ENCODE measurements at regions of chr16 and their contacts with region 1.

Region 1: DNA sequence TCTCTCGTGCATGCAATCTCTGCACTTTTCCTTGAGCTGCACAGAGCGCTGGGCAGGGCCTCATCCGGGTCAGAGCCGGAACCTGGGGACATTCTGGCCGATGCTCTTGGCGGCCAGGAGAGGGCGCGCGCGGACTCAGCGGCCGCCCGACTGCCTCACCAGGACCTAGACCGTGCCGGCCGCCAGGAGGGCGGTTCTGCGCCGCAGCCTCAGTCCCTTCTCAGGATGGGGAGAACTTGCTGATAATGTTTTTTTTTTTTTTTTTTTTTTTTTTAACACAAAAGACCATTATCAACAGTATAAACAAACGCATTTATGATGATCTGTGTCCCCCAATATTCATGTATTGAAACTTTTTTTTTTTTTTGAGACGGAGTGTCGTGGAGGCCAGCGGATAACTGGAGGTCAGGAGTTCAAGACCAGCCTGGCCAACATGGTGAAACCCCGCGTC is 8.1 kb upstream of the FLYWCH2 start:
- DNase-seq: peak; percentile 82 to 88 (median 86)
- ATAC-seq: peak; percentile 100
- H3K4me3 ChIP-seq: no peak overlapping the region
- H3K27ac ChIP-seq: no peak overlapping the region
- H3K4me1 ChIP-seq: peaks cover 0 to 11% of the 10 kb centered on the region in 2 experiments; a peak in 3 of 5 replicates
- H3K27me3 ChIP-seq: no peaks in the 10 kb centered on the region
- CTCF ChIP-seq: peak; percentile 97 to 99 (median 98)
- EP300 ChIP-seq: no peak
- POLR2A ChIP-seq: no peak
- RAD21 ChIP-seq: peak; percentile 78 to 91

Region 2: GRCh38 chr16:2350500-2350899 is 524.4 kb before region 1 on chr16:
- CTCF ChIA-PET with region 1: no interaction called
- POLR2A ChIA-PET with region 1: no interaction called
- in situ Hi-C with region 1: no loop called
- intact Hi-C with region 1: no loop called
- DNase-seq: no peak
- ATAC-seq: no peak
- H3K4me3 ChIP-seq: no peak overlapping the region
- H3K27ac ChIP-seq: no peak overlapping the region
- H3K4me1 ChIP-seq: no peaks in the 10 kb centered on the region
- H3K27me3 ChIP-seq: no peaks in the 10 kb centered on the region
- CTCF ChIP-seq: no peak
- EP300 ChIP-seq: no peak
- POLR2A ChIP-seq: no peak
- RAD21 ChIP-seq: no peak

Region 3: GRCh38 chr16:2838928-2839327 is 36.0 kb before region 1 on chr16:
- CTCF ChIA-PET with region 1: interaction called, 23 read pairs
- POLR2A ChIA-PET with region 1: no interaction called
- in situ Hi-C with region 1: loop called (anchors 5 kb)
- intact Hi-C with region 1: no loop called
- DNase-seq: peak; percentile 75 to 80 (median 77)
- ATAC-seq: peak; percentile 92
- H3K4me3 ChIP-seq: no peak overlapping the region
- H3K27ac ChIP-seq: no peak overlapping the region
- H3K4me1 ChIP-seq: peaks cover 3 to 41% of the 10 kb centered on the region in 2 experiments; a peak in 4 of 5 replicates
- H3K27me3 ChIP-seq: peaks cover 4 to 22% of the 10 kb centered on the region in 2 experiments; a peak in 2 of 5 replicates
- CTCF ChIP-seq: peak; percentile 88 to 95 (median 94)
- EP300 ChIP-seq: no peak
- POLR2A ChIP-seq: no peak
- RAD21 ChIP-seq: peak; percentile 89 to 95

Region 4: DNA sequence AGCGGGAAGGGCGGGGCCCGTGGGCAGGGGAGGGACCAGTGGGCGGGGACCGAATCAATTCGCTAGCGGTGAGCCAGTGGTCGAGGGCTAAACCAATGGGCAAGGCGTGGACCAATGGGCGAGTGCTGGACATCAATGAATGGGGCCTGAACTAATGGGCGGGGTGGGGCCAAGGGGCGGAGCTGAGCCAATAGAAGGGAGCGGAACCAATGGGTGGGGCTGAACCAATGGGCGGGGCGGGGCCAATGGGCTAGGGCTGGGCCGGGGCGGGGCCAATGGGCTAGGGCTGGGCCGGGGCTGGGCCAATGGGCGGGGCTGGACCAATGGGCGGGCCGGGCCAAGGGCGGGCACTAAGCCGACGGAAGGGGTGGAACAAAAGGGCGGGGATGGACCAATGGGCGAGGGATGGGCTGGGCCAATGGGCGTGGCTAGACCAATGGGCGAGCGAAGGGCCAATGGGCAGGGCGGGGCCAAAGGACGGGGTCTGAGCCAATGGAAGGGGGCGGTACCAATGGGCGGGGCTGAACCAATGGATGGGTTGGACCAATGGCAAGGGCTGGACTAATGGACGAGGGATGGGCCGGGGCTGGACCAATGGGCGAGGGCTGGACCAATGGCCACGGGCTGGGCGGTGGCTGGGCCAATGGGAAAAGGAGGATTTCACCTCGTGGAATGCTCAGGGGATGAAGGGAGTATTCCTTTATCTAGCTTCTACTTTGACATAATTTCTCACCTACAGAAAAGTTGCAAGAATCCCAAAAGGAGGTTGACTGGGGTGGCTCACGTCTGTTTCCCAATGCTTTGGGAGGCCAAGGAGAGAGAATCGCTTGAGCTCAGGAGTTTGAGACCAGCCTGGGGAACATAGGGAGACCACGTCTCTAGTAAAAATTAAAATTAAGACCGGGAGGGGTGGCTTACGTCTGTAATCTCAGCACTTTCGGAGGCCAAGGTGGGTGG is 30.8 kb after region 1 on chr16:
- CTCF ChIA-PET with region 1: interaction called, 24 read pairs
- POLR2A ChIA-PET with region 1: interaction called, 3 read pairs
- in situ Hi-C with region 1: loop called (anchors 5 kb)
- intact Hi-C with region 1: loop called (anchors 1 kb)
- DNase-seq: peak; percentile 96 to 99 (median 98)
- ATAC-seq: peak; percentile 90
- H3K4me3 ChIP-seq: peak overlapping the region; percentile 99
- H3K27ac ChIP-seq: peak overlapping the region; percentile 94
- H3K4me1 ChIP-seq: peaks cover 14 to 33% of the 10 kb centered on the region in 2 experiments; a peak in 4 of 5 replicates
- H3K27me3 ChIP-seq: no peaks in the 10 kb centered on the region
- CTCF ChIP-seq: no peak
- EP300 ChIP-seq: no peak
- POLR2A ChIP-seq: no peak
- RAD21 ChIP-seq: no peak

Region 5: DNA sequence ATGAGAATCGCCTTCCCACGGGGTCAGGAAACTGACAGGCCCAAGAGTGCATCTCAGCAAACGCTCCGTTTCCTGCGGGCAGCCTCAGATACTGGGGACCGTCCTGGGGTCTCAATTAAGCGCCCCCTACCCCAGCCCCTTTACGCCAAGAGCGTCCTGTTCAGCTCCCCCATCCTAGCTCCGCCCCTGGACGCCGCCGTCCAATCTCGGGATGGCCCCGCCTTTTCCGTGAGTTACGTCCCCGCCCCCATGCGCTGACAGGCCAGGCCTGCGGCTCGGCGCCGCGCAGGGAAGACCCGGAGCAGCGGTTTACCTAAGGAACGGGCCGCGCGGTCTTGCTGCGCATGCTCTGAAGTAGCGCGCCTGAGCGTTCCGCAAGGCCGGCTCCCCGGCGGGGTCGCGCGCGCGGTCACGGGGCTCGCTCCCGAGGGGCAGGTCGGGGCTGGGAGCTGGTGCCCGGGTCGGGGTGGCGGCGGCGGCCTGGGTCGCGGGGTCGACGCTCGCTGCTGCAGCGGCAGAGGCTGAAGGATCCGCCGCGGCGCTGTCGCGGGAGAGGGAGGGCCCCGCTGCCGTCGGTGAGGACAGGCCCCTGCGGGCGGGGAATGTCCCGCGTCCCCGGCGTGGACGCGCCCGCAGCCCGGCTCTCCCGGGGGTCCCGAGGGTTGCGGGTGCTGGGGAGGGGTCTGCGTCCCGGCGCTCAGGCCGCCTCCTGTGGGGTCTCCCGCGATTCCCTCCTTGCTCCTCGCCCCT is 36.8 kb after region 1 on chr16 and contains the start of gene FLYWCH1:
- CTCF ChIA-PET with region 1: interaction called, 24 read pairs
- POLR2A ChIA-PET with region 1: interaction called, 5 read pairs
- in situ Hi-C with region 1: loop called (anchors 5 kb)
- intact Hi-C with region 1: no loop called
- DNase-seq: peak; percentile 93 to 99 (median 94)
- ATAC-seq: peak; percentile 96
- H3K4me3 ChIP-seq: peak within 1 kb of the TSS; percentile 57
- H3K27ac ChIP-seq: peak within 1 kb of the TSS; percentile 76
- H3K4me1 ChIP-seq: peaks cover 20 to 38% of the 10 kb centered on the region in 2 experiments
- H3K27me3 ChIP-seq: no peaks in the 10 kb centered on the region
- CTCF ChIP-seq: no peak
- EP300 ChIP-seq: no peak
- POLR2A ChIP-seq: peak; percentile 65; the same call in 1 of the 2 replicates
- RAD21 ChIP-seq: no peak
- polyA plus RNA-seq, gene FLYWCH1: 0.18 to 0.52 TPM

Region 6: GRCh38 chr16:2919511-2920255 is 44.7 kb after region 1 on chr16:
- CTCF ChIA-PET with region 1: interaction called, 11 read pairs
- POLR2A ChIA-PET with region 1: no interaction called
- in situ Hi-C with region 1: loop called (anchors 5 kb)
- intact Hi-C with region 1: loop called (anchors 2 kb)
- DNase-seq: peak; percentile 58 to 76 (median 62)
- ATAC-seq: peak; percentile 70
- H3K4me3 ChIP-seq: no peak overlapping the region
- H3K27ac ChIP-seq: no peak overlapping the region
- H3K4me1 ChIP-seq: peaks cover 9 to 11% of the 10 kb centered on the region in 2 experiments
- H3K27me3 ChIP-seq: no peaks in the 10 kb centered on the region
- CTCF ChIP-seq: peak; percentile 78 to 87 (median 86)
- EP300 ChIP-seq: no peak
- POLR2A ChIP-seq: no peak
- RAD21 ChIP-seq: peak; percentile 76 to 79

Region 7: GRCh38 chr16:2926650-2927646 is 52.0 kb after region 1 on chr16:
- CTCF ChIA-PET with region 1: interaction called, 17 read pairs
- POLR2A ChIA-PET with region 1: no interaction called
- in situ Hi-C with region 1: no loop called
- intact Hi-C with region 1: no loop called
- DNase-seq: peak; percentile 75 to 93 (median 78)
- ATAC-seq: peak; percentile 98
- H3K4me3 ChIP-seq: no peak overlapping the region
- H3K27ac ChIP-seq: no peak overlapping the region
- H3K4me1 ChIP-seq: peaks cover 3 to 22% of the 10 kb centered on the region in 2 experiments; a peak in 3 of 5 replicates
- H3K27me3 ChIP-seq: no peaks in the 10 kb centered on the region
- CTCF ChIP-seq: peak; percentile 96 to 99 (median 97)
- EP300 ChIP-seq: no peak
- POLR2A ChIP-seq: no peak
- RAD21 ChIP-seq: peak; percentile 64 to 78

Region 8: GRCh38 chr16:2980227-2981086 is 105.5 kb after region 1 on chr16 and contains the start of gene PKMYT1:
- CTCF ChIA-PET with region 1: interaction called, 7 read pairs
- POLR2A ChIA-PET with region 1: no interaction called
- in situ Hi-C with region 1: no loop called
- intact Hi-C with region 1: loop called (anchors 5 kb)
- DNase-seq: peak; percentile 95 to 99 (median 98)
- ATAC-seq: peak; percentile 78
- H3K4me3 ChIP-seq: peak within 1 kb of the TSS; percentile 63
- H3K27ac ChIP-seq: peak within 1 kb of the TSS; percentile 99
- H3K4me1 ChIP-seq: peaks cover 19 to 79% of the 10 kb centered on the region in 2 experiments
- H3K27me3 ChIP-seq: no peaks in the 10 kb centered on the region
- CTCF ChIP-seq: no peak
- EP300 ChIP-seq: no peak
- POLR2A ChIP-seq: peak; percentile 93
- RAD21 ChIP-seq: no peak
- polyA plus RNA-seq, gene PKMYT1: 8.7 to 12.8 TPM